ENCODE measurements at regions of chr9 and their contacts with region 1.

Region 1: GRCh38 chr9:128412120-128412790 is 8.4 kb upstream of the CERCAM start:
- DNase-seq: no peak
- H3K4me3 ChIP-seq: no peak overlapping the region
- H3K27ac ChIP-seq: no peak overlapping the region
- H3K4me1 ChIP-seq: peaks cover 6% of the 10 kb centered on the region
- H3K27me3 ChIP-seq: no peaks in the 10 kb centered on the region
- CTCF ChIP-seq: peak; percentile 47 to 68

Region 2: DNA sequence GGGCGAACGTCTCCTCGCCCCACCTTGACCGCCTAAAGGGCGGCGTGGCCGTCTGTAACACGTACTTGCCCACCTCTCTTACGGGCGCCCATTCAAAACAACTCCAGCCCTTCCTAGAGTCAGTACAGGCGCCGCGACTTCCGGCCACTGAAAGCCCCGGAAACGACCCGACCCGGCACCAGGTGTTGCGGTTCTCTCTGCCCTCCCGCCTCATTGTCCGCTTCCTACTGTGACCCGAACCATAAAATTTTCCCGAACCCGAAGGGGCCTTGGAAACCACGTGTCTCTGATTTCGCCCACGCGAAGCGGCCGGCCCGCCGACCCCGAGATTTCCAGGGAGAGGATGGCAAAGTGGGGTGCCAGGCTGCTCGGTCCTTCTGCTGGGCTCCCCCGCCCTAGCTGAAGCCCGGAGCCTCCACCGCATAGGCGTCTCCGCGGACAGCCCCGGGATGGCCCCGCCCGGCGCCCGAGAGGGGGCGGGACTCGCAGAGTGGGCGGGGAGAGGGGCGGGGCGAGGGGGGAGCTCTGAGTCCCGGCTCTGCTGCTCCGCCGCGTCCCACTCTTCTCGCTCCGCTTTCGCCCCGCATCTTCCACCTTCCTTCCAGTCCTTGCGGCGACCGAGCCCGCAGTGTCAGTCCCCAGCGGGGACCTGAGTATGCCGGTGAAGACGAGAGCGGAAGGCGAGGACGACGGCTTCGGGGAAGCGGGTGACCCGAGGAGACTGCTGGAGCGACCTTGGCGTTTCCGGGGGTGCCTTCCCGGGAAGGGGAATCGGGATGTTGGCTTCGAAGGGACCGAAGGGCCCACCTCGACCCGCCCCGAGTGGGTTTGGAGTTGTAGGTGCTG is 284.0 kb before region 1 on chr9:
- CTCF ChIA-PET with region 1: no interaction called
- dilution Hi-C with region 1: no loop called
- in situ Hi-C with region 1: no loop called
- intact Hi-C with region 1: loop called (anchors 5 kb)
- DNase-seq: peak; percentile 91
- H3K4me3 ChIP-seq: peak overlapping the region; percentile 64 to 100 (median 91)
- H3K27ac ChIP-seq: peak overlapping the region; percentile 90
- H3K4me1 ChIP-seq: peaks cover 15% of the 10 kb centered on the region
- H3K27me3 ChIP-seq: no peaks in the 10 kb centered on the region
- CTCF ChIP-seq: no peak

Region 3: DNA sequence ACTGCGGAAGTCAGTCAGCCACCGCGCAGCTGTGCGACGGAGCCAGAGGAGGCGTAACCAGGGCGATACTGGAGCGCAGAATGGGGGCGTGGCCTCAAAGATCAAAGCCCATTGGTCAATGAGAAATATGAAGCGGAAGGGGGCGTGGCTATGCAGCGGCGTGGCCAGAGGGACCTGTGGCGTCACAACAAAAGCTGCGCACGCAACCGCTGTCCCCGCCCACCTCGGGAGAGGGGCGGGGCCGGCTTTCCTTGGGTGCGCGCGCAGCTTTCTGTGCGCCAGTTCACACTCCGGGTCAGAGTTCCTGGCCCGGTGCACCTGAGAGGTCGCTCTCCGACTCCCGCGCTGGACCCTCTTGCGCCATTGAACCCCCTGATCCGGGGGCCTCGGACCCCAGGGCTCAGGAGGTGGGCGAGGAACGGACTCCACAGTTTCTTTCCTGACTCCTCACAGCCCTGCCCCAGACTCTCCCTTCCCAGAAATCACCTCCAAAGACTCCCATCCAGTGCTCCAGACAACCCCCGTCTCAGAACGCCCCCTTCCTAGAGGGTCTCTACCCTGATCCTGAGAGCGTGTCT is 136.2 kb before region 1 on chr9 and contains the starts of genes GOLGA2 and SWI5:
- CTCF ChIA-PET with region 1: no interaction called
- dilution Hi-C with region 1: no loop called
- in situ Hi-C with region 1: loop called in 1 of 2 experiments (anchors 10 kb)
- intact Hi-C with region 1: no loop called
- DNase-seq: peak; percentile 98
- H3K4me3 ChIP-seq: peak within 1 kb of the TSS; percentile 94 to 96 (median 95)
- H3K27ac ChIP-seq: peak within 1 kb of the TSS; percentile 84
- H3K4me1 ChIP-seq: peaks cover 25% of the 10 kb centered on the region
- H3K27me3 ChIP-seq: no peaks in the 10 kb centered on the region
- CTCF ChIP-seq: no peak
- total RNA-seq, gene GOLGA2: 42.2 to 76.7 TPM
- total RNA-seq, gene SWI5: 13.5 to 26.3 TPM

Region 4: GRCh38 chr9:128296337-128297220 is 115.7 kb before region 1 on chr9:
- CTCF ChIA-PET with region 1: no interaction called
- dilution Hi-C with region 1: no loop called
- in situ Hi-C with region 1: no loop called
- intact Hi-C with region 1: loop called (anchors 1 kb)
- DNase-seq: no peak
- H3K4me3 ChIP-seq: no peak overlapping the region
- H3K27ac ChIP-seq: no peak overlapping the region
- H3K4me1 ChIP-seq: no peaks in the 10 kb centered on the region
- H3K27me3 ChIP-seq: no peaks in the 10 kb centered on the region
- CTCF ChIP-seq: no peak

Region 5: GRCh38 chr9:128316421-128316820 is 95.8 kb before region 1 on chr9:
- CTCF ChIA-PET with region 1: no interaction called
- dilution Hi-C with region 1: loop called (anchors 5 kb)
- in situ Hi-C with region 1: no loop called
- intact Hi-C with region 1: no loop called
- DNase-seq: no peak
- H3K4me3 ChIP-seq: no peak overlapping the region
- H3K27ac ChIP-seq: no peak overlapping the region
- H3K4me1 ChIP-seq: peaks cover 4% of the 10 kb centered on the region
- H3K27me3 ChIP-seq: no peaks in the 10 kb centered on the region
- CTCF ChIP-seq: no peak

Region 6: GRCh38 chr9:128361986-128362646 is 50.1 kb before region 1 on chr9:
- CTCF ChIA-PET with region 1: interaction called, 3 read pairs
- dilution Hi-C with region 1: no loop called
- in situ Hi-C with region 1: loop called in 1 of 2 experiments (anchors 5 kb)
- intact Hi-C with region 1: loop called (anchors 1 kb)
- DNase-seq: peak; percentile 72
- H3K4me3 ChIP-seq: peak overlapping the region in 2 of 3 experiments; percentile 26 to 56
- H3K27ac ChIP-seq: no peak overlapping the region
- H3K4me1 ChIP-seq: peaks cover 25% of the 10 kb centered on the region
- H3K27me3 ChIP-seq: no peaks in the 10 kb centered on the region
- CTCF ChIP-seq: peak; percentile 87 to 91

Region 7: DNA sequence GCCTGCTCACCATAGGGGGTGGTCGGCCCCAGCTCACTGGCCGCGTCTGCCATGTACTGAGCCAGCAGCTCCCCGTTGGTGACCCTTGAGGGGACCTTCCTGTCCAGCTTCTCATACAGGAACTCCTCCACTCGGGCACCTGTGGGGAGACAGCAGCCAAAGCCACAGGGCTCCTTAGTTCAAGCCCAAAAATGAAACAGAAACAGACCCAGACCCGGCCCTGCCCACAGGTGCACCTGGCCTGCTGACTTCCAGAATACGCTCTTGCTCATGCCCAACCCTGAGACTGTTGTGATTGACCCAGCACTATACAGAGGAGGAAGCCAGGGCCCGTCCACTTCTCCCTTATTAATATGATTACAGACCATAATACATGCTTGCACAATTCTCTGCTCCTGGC is 608.8 kb after region 1 on chr9:
- CTCF ChIA-PET with region 1: no interaction called
- dilution Hi-C with region 1: no loop called
- in situ Hi-C with region 1: no loop called
- intact Hi-C with region 1: no loop called
- DNase-seq: no peak
- H3K4me3 ChIP-seq: no peak overlapping the region
- H3K27ac ChIP-seq: no peak overlapping the region
- H3K4me1 ChIP-seq: peaks cover 9% of the 10 kb centered on the region
- H3K27me3 ChIP-seq: no peaks in the 10 kb centered on the region
- CTCF ChIP-seq: no peak

Measured in mammary epithelial cell (primary cell).